B cell (primary cell): ENCODE measurements at regions of chr13 and their contacts with region 1.

Region 1: GRCh38 chr13:25286969-25287961 is at the start of gene MTMR6:
- DNase-seq: peak; percentile 99
- ATAC-seq: peak; percentile 88
- H3K4me3 ChIP-seq: peak within 1 kb of the TSS; percentile 74 to 98 (median 94)
- H3K4me3 Mint-ChIP-seq: peak within 1 kb of the TSS; percentile 97
- H3K27ac ChIP-seq: peak within 1 kb of the TSS; percentile 99 to 100
- H3K27ac Mint-ChIP-seq: peak within 1 kb of the TSS; percentile 98
- H3K4me1 ChIP-seq: peaks cover 12 to 17% of the 10 kb centered on the region in 2 donors
- H3K4me1 Mint-ChIP-seq: peaks cover 39% of the 10 kb centered on the region
- H3K27me3 ChIP-seq: peaks cover 0 to 11% (median 2%) of the 10 kb centered on the region in 4 experiments
- H3K27me3 Mint-ChIP-seq: peaks cover 13% of the 10 kb centered on the region
- CTCF ChIP-seq: peak; percentile 99
- total RNA-seq, gene MTMR6: 21.4 and 22.1 TPM in 2 replicates

Region 2: DNA sequence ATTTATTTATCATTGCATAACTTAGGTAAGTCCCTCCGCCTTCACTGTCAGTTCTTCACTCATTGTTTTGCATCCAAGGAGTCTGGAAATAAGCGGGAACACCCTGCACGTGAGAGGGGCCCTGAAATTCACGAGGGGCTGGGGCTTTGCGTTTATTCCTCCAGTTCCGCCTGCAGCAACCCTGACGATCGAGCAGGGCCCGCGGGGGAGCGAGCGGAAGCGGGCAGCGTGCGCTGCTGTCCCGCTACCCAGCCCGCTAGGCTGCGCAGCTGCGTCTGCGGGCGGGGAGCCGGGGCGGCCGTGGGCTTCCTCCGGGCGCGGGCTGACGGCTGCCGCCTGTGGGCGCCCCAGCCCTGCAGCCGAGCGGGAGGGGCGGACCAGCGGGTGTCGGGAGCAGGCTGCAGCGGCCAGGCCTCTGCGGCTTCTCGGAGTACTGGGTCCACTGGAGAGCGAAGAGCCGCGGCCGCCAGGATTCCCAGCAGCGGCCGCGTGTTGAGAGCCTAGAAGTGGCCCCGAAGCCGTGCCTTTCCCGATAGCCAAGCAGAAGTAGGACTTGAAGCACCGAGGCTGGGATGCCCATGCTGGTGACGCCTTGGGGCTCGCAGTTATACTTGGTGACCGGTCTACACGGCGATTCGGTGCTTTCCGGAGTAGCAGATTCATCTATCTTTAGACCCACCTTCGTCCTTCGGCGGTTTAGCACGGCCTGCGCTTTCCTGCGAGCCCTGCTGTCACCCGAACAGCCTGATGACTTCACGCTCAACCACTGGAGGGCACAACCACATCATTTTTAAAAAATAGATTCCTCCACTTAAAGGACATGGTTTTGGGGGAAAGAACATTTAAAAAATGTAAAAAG is 1820.9 kb before region 1 on chr13:
- CTCF ChIA-PET with region 1: no interaction called
- POLR2A ChIA-PET with region 1: no interaction called
- intact Hi-C with region 1: loop called (anchors 10 kb)
- DNase-seq: peak; percentile 77
- ATAC-seq: peak; percentile 89
- H3K4me3 ChIP-seq: peak overlapping the region; percentile 42 to 70 (median 53)
- H3K4me3 Mint-ChIP-seq: peak overlapping the region; percentile 87
- H3K27ac ChIP-seq: no peak overlapping the region
- H3K27ac Mint-ChIP-seq: peak overlapping the region; percentile 46
- H3K4me1 ChIP-seq: peaks cover 4 to 12% of the 10 kb centered on the region in 2 donors
- H3K4me1 Mint-ChIP-seq: peaks cover 8% of the 10 kb centered on the region
- H3K27me3 ChIP-seq: peaks cover 0 to 27% (median 9%) of the 10 kb centered on the region in 4 experiments
- H3K27me3 Mint-ChIP-seq: peaks cover 58% of the 10 kb centered on the region
- CTCF ChIP-seq: peak; percentile 68

Region 3: DNA sequence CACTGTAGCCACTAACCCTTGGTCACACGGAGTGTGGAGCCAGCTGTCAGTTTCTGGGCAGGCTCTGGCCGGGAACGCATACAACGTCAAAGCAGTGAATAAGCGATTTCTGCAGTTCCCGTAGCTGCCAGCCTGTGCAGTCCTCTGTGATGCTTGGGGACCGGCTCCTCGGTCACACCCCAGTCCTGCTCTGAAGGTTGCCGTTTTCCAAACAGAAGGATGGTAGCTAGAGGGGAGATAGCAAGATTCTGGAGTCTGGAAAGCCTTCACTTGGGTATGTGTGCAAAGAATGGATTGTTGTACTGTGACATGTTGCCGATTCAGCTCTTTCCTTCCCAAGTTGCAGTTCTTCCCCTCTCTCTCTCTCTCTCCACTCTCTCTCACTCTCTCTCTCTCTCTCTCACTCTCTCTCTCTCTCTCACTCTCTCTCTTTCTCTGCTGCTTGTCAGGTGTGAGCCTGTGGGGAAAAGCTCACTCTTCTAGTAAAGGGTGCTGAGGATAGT is 1016.6 kb before region 1 on chr13:
- CTCF ChIA-PET with region 1: no interaction called
- POLR2A ChIA-PET with region 1: no interaction called
- intact Hi-C with region 1: loop called (anchors 10 kb)
- DNase-seq: peak; percentile 76
- ATAC-seq: peak; percentile 52
- H3K4me3 ChIP-seq: peak overlapping the region; percentile 40 to 71 (median 62)
- H3K4me3 Mint-ChIP-seq: peak overlapping the region; percentile 89
- H3K27ac ChIP-seq: peak overlapping the region; percentile 84 to 89
- H3K27ac Mint-ChIP-seq: peak overlapping the region; percentile 98
- H3K4me1 ChIP-seq: peaks cover 55 to 66% of the 10 kb centered on the region in 2 donors
- H3K4me1 Mint-ChIP-seq: peaks cover 73% of the 10 kb centered on the region
- H3K27me3 ChIP-seq: no peaks in the 10 kb centered on the region
- H3K27me3 Mint-ChIP-seq: no peaks in the 10 kb centered on the region
- CTCF ChIP-seq: peak; percentile 13

Region 4: GRCh38 chr13:25253687-25254086 is 33.6 kb before region 1 on chr13:
- CTCF ChIA-PET with region 1: interaction called, 3 read pairs
- POLR2A ChIA-PET with region 1: no interaction called
- intact Hi-C with region 1: loop called (anchors 5 kb)
- DNase-seq: no peak
- ATAC-seq: no peak
- H3K4me3 ChIP-seq: no peak overlapping the region
- H3K4me3 Mint-ChIP-seq: no peak overlapping the region
- H3K27ac ChIP-seq: no peak overlapping the region
- H3K27ac Mint-ChIP-seq: no peak overlapping the region
- H3K4me1 ChIP-seq: peaks cover 0 to 4% of the 10 kb centered on the region in 2 donors
- H3K4me1 Mint-ChIP-seq: peaks cover 3% of the 10 kb centered on the region
- H3K27me3 ChIP-seq: no peaks in the 10 kb centered on the region
- H3K27me3 Mint-ChIP-seq: no peaks in the 10 kb centered on the region
- CTCF ChIP-seq: no peak

Region 5: GRCh38 chr13:25301347-25302047 is 14.2 kb after region 1 on chr13 and contains the start of gene NUP58:
- CTCF ChIA-PET with region 1: interaction called, 5 read pairs
- POLR2A ChIA-PET with region 1: no interaction called
- intact Hi-C with region 1: loop called (anchors 1 kb)
- DNase-seq: peak; percentile 97
- ATAC-seq: peak; percentile 99
- H3K4me3 ChIP-seq: peak within 1 kb of the TSS; percentile 69 to 94 (median 86)
- H3K4me3 Mint-ChIP-seq: peak within 1 kb of the TSS; percentile 87
- H3K27ac ChIP-seq: peak within 1 kb of the TSS; percentile 90 to 97
- H3K27ac Mint-ChIP-seq: peak within 1 kb of the TSS; percentile 95
- H3K4me1 ChIP-seq: peaks cover 13 to 17% of the 10 kb centered on the region in 2 donors
- H3K4me1 Mint-ChIP-seq: peaks cover 33% of the 10 kb centered on the region
- H3K27me3 ChIP-seq: peaks cover 0 to 20% (median 15%) of the 10 kb centered on the region in 4 experiments
- H3K27me3 Mint-ChIP-seq: peaks cover 17% of the 10 kb centered on the region
- CTCF ChIP-seq: no peak
- total RNA-seq, gene NUP58: 41.0 and 41.7 TPM in 2 replicates

Region 6: DNA sequence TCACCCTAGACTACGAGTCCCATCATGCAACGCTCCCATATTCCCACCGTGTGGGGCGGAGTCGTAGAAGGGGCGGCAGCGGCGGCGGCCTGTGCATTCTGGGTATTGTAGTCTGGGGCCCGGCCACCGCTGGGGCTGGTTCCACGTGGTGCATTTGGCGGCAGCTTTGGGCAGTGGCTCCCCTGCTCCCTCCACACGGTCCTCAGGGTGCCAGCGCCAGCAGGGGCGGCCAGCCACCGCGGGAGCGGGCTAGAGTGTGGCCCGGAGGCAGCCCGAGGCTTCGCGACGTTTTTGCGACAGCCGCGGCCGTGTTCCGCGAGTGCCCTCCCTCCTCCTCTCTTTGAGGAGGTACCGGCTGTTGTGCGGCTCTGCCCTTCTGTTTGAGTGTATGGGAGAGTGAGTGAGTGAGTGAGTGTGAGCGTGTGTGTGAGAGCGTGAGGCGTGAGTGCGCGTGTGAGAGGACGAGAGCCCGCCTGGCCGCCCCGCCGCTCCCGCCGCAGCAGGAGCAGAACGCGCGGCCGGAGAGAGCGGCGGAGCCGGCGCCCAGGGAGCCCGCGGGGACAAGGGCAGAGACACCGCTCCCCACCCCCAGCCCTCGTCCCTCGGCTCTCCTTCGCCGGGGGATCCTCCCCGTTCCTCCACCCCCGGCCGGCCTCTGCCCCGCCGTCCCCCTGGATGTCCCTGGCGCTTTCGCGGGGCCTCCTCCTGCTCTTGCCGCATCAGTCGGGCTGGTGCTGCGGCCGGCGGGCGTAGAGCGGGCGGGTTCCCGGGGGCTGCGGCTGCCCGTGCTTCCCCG is 966.7 kb after region 1 on chr13 and contains the start of gene CDK8:
- CTCF ChIA-PET with region 1: no interaction called
- POLR2A ChIA-PET with region 1: no interaction called
- intact Hi-C with region 1: loop called (anchors 5 kb)
- DNase-seq: peak; percentile 97
- ATAC-seq: peak; percentile 86
- H3K4me3 ChIP-seq: peak within 1 kb of the TSS; percentile 66 to 98 (median 77)
- H3K4me3 Mint-ChIP-seq: peak within 1 kb of the TSS; percentile 83
- H3K27ac ChIP-seq: peak within 1 kb of the TSS; percentile 72 to 80
- H3K27ac Mint-ChIP-seq: peak within 1 kb of the TSS; percentile 81
- H3K4me1 ChIP-seq: peaks cover 14 to 17% of the 10 kb centered on the region in 2 donors
- H3K4me1 Mint-ChIP-seq: peaks cover 29% of the 10 kb centered on the region
- H3K27me3 ChIP-seq: peaks cover 0 to 4% (median 2%) of the 10 kb centered on the region in 4 experiments
- H3K27me3 Mint-ChIP-seq: peaks cover 8% of the 10 kb centered on the region
- CTCF ChIP-seq: no peak
- total RNA-seq, gene CDK8: 13.5 TPM in 2 replicates

Region 7: GRCh38 chr13:27251166-27252091 is 1964.2 kb after region 1 on chr13 and contains the start of gene RPL21:
- CTCF ChIA-PET with region 1: no interaction called
- POLR2A ChIA-PET with region 1: no interaction called
- intact Hi-C with region 1: loop called (anchors 5 kb)
- DNase-seq: peak; percentile 99
- ATAC-seq: peak; percentile 91
- H3K4me3 ChIP-seq: peak within 1 kb of the TSS; percentile 85 to 100 (median 95)
- H3K4me3 Mint-ChIP-seq: peak within 1 kb of the TSS; percentile 95
- H3K27ac ChIP-seq: peak within 1 kb of the TSS; percentile 93 to 96
- H3K27ac Mint-ChIP-seq: peak within 1 kb of the TSS; percentile 100
- H3K4me1 ChIP-seq: peaks cover 16 to 30% of the 10 kb centered on the region in 2 donors
- H3K4me1 Mint-ChIP-seq: peaks cover 48% of the 10 kb centered on the region
- H3K27me3 ChIP-seq: no peaks in the 10 kb centered on the region
- H3K27me3 Mint-ChIP-seq: no peaks in the 10 kb centered on the region
- CTCF ChIP-seq: no peak
- total RNA-seq, gene RPL21: 1,840 and 1,937 TPM in 2 replicates